ENCODE measurements at regions of chr1 and their contacts with region 1.

Region 1: GRCh38 chr1:154479764-154480421 is 22.1 kb upstream of the TDRD10 start:
- DNase-seq: peak; percentile 92
- H3K4me3 ChIP-seq: no peak overlapping the region
- H3K27ac ChIP-seq: no peak overlapping the region
- H3K4me1 ChIP-seq: peaks cover 35% of the 10 kb centered on the region
- H3K27me3 ChIP-seq: no peaks in the 10 kb centered on the region
- CTCF ChIP-seq: peak; percentile 77 to 93
- POLR2A ChIP-seq: no peak

Region 2: GRCh38 chr1:154198756-154199562 is 280.9 kb before region 1 on chr1:
- CTCF ChIA-PET with region 1: interaction called, 3 read pairs
- POLR2A ChIA-PET with region 1: no interaction called
- dilution Hi-C with region 1: no loop called
- intact Hi-C with region 1: loop called (anchors 10 kb)
- DNase-seq: peak; percentile 78
- H3K4me3 ChIP-seq: no peak overlapping the region
- H3K27ac ChIP-seq: no peak overlapping the region
- H3K4me1 ChIP-seq: no peaks in the 10 kb centered on the region
- H3K27me3 ChIP-seq: peaks cover 3 to 4% of the 10 kb centered on the region in 2 experiments
- CTCF ChIP-seq: peak; percentile 31 to 56
- POLR2A ChIP-seq: no peak

Region 3: DNA sequence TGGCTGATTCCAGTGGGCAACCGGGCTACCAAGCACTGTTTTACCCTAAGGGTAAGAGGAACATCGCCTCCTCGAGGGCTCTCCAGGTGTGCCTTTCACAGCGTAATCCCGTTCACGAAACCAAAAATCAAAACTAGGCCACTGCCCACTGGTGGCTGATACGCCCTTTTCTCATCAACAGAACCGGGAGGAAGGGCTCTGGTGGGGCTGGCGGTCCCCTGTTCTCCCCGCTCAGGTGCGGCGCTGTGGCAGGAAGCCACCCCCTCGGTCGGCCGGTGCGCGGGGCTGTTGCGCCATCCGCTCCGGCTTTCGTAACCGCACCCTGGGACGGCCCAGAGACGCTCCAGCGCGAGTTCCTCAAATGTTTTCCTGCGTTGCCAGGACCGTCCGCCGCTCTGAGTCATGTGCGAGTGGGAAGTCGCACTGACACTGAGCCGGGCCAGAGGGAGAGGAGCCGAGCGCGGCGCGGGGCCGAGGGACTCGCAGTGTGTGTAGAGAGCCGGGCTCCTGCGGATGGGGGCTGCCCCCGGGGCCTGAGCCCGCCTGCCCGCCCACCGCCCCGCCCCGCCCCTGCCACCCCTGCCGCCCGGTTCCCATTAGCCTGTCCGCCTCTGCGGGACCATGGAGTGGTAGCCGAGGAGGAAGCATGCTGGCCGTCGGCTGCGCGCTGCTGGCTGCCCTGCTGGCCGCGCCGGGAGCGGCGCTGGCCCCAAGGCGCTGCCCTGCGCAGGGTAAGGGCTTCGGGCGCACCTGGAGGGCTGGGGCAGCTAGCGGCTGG is 74.7 kb before region 1 on chr1 and contains the start of gene IL6R:
- CTCF ChIA-PET with region 1: interaction called, 7 read pairs
- POLR2A ChIA-PET with region 1: no interaction called
- dilution Hi-C with region 1: no loop called
- intact Hi-C with region 1: loop called (anchors 2 kb)
- DNase-seq: peak; percentile 83
- H3K4me3 ChIP-seq: peak within 1 kb of the TSS; percentile 6 to 49 (median 36)
- H3K27ac ChIP-seq: peak within 1 kb of the TSS; percentile 18
- H3K4me1 ChIP-seq: peaks cover 13% of the 10 kb centered on the region
- H3K27me3 ChIP-seq: no peaks in the 10 kb centered on the region
- CTCF ChIP-seq: peak; percentile 28 to 42
- POLR2A ChIP-seq: no peak
- total RNA-seq, gene IL6R: 3.3 and 4.8 TPM in 2 replicates

Region 4: DNA sequence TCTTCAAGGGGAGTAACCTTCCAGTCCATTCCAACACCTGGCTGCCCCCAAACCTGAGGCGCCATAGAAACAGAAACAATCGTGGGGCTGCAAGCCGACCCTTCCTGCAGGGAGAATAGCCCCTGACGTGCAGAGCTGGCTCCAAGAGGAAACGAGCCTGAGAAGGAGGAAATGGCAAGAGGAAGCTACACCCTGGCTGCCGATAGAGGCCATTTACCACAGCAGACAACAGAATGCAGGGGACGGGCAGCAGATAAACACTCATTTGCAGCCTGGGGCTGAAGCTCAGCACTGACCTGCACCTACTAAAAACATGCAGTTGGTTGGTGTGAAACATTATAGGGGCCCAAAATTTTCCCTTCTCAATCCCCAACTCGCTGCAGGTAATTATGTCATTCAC is 13.4 kb after region 1 on chr1:
- CTCF ChIA-PET with region 1: interaction called, 50 read pairs
- POLR2A ChIA-PET with region 1: interaction called, 13 read pairs
- dilution Hi-C with region 1: no loop called
- intact Hi-C with region 1: loop called (anchors 1 kb)
- DNase-seq: peak; percentile 84
- H3K4me3 ChIP-seq: peak overlapping the region in 1 of 3 experiments; percentile 3
- H3K27ac ChIP-seq: peak overlapping the region; percentile 89
- H3K4me1 ChIP-seq: peaks cover 89% of the 10 kb centered on the region
- H3K27me3 ChIP-seq: no peaks in the 10 kb centered on the region
- CTCF ChIP-seq: no peak
- POLR2A ChIP-seq: peak; percentile 75

Region 5: DNA sequence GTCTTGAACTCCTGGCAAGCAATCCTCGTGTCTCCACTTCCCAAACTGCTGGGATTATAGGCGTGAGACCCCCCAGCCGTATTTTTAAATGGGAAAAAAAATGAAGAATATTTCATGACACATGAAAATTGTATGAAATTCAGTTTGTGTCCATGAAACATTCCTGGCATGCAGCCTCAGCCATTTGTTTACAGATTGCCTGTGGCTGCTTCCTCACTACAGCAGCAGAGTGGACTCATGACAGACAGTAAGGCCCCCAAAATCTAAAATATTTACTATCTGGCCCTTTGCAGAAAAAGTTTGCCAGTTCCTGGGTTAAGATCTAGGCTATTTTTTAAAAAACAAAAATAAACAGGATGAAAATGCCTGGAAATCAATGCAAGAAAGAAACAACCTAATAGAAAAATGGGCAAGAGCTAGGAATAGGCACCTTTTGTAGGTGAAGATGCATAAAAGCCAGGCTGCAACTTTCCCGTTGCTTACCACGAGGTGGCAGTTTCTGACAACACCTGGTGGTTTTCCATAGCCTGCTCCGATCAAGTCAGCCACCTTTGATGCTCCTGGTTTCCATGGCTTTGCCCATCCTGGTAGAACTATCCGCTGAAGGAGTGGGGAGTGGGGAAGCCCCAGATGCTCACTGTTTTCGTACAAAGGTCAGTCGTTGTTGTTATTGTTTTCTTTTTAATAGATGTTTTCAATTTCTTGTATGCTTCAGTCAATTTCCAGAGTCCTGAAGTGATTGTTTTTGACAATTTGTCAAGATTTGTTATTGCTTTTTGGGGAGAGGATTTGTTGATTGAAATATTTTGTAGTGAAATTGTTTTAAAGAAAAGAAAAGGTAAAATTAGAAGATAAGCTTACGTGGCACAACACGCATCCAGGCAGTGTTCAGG is 54.3 kb after region 1 on chr1:
- CTCF ChIA-PET with region 1: interaction called, 61 read pairs
- POLR2A ChIA-PET with region 1: no interaction called
- dilution Hi-C with region 1: no loop called
- intact Hi-C with region 1: no loop called
- DNase-seq: no peak
- H3K4me3 ChIP-seq: no peak overlapping the region
- H3K27ac ChIP-seq: no peak overlapping the region
- H3K4me1 ChIP-seq: no peaks in the 10 kb centered on the region
- H3K27me3 ChIP-seq: no peaks in the 10 kb centered on the region
- CTCF ChIP-seq: peak; percentile 14 to 27
- POLR2A ChIP-seq: no peak

Region 6: DNA sequence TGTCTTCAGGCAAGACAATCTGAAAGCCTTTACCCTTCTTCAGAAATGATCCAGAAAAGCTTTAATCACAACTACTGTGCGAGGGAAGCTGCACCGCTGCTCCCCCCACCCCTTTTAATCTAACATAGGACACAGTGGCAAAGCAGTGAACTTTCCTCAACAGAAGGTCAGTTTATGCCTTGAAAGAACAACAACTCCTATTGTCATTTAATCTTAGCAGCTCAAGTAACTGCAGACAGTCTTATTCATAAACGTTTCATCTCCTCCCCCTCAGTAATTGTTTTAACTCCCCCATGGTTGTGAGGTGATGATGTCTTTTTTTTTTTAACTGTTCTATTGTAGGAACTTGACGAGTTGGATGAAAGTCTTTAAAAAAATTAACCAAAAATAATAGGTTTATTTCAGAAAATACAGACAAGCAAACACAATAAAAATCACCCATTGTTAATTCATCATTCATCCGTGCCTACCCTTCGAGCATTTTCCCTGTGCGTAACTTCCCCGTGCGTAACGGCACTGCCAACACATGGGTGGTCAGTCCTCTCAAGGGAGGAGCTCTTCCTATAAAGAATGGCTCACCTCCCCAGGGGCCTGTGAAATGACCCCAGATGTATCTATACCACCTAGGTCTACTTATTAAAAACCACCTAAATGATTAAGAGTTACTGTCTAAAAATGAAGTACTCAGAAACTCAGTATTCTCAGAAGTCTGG is 131.4 kb after region 1 on chr1:
- CTCF ChIA-PET with region 1: no interaction called
- POLR2A ChIA-PET with region 1: no interaction called
- dilution Hi-C with region 1: no loop called
- intact Hi-C with region 1: no loop called
- DNase-seq: no peak
- H3K4me3 ChIP-seq: no peak overlapping the region
- H3K27ac ChIP-seq: no peak overlapping the region
- H3K4me1 ChIP-seq: peaks cover 6% of the 10 kb centered on the region
- H3K27me3 ChIP-seq: no peaks in the 10 kb centered on the region
- CTCF ChIP-seq: no peak
- POLR2A ChIP-seq: no peak

Region 7: DNA sequence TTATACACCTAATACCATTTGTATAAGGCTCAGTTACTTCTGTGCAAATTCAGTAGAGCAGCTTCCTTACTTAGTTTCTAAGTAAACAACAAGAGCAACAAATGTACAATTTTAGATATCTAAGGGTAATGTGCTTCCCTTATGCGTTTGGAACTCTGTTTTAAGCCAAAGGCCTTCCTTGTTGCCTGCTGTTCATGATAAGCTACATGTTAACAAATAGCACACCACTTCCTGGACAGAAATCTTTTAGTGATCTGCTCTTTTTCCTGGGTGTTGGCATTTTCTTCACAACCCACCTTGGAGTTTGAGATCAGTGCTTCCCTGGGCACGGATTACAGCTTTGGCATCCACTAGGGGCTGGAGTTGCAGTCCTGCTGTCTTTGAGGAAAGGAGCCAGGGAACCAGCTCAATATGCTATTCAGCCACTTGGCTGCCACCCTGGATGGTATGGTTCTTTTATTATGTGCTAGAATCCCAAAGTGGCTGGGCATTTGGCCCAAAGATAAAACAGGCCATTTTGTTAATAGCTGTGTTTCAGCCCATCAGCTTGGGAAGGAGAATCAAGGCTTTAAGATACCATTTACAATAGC is 183.7 kb after region 1 on chr1:
- CTCF ChIA-PET with region 1: interaction called, 10 read pairs
- POLR2A ChIA-PET with region 1: no interaction called
- dilution Hi-C with region 1: no loop called
- intact Hi-C with region 1: no loop called
- DNase-seq: no peak
- H3K4me3 ChIP-seq: no peak overlapping the region
- H3K27ac ChIP-seq: no peak overlapping the region
- H3K4me1 ChIP-seq: no peaks in the 10 kb centered on the region
- H3K27me3 ChIP-seq: peaks cover 7 to 30% of the 10 kb centered on the region in 2 experiments
- CTCF ChIP-seq: no peak
- POLR2A ChIP-seq: no peak

Region 8: GRCh38 chr1:154809436-154810413 is 329.8 kb after region 1 on chr1:
- CTCF ChIA-PET with region 1: no interaction called
- POLR2A ChIA-PET with region 1: no interaction called
- dilution Hi-C with region 1: no loop called
- intact Hi-C with region 1: no loop called
- DNase-seq: peak; percentile 62
- H3K4me3 ChIP-seq: no peak overlapping the region
- H3K27ac ChIP-seq: no peak overlapping the region
- H3K4me1 ChIP-seq: peaks cover 9% of the 10 kb centered on the region
- H3K27me3 ChIP-seq: peaks cover 0 to 11% of the 10 kb centered on the region in 2 experiments
- CTCF ChIP-seq: no peak
- POLR2A ChIP-seq: no peak

Region 9: DNA sequence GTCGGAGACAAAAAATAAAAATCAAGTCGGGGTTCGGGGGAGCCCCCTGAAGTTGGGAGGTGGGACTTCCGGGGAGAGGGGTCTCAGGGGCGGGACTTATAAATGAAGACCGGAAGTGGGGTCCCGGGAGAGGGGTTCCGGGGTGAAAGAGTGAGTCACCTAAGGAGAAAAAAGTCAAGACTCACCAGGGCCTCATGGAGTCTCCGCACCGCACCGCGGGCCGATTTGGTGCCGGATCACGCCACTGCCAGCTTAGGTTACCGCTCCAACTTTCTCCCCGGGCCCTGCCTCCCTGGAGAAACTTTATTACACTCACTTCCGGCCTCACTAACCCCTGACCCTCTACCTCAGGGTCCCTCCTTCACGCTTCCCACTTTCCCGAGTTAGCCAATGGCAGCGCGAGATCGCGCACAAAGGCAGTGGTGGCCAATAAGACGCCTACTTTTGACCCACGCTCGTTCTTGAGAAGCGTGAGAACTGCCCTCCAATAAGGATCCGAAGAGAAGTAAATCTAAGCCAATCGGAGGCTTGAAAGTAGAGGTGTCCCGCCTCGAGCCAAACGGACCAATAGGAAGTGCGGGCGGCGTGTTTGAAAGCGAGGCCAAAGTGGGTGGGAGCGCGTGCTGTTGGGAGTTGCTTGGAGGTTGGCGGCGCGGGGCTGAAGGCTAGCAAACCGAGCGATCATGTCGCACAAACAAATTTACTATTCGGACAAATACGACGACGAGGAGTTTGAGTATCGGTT is 494.3 kb after region 1 on chr1 and contains the start of gene CKS1B:
- CTCF ChIA-PET with region 1: no interaction called
- POLR2A ChIA-PET with region 1: no interaction called
- dilution Hi-C with region 1: no loop called
- intact Hi-C with region 1: loop called (anchors 10 kb)
- DNase-seq: peak; percentile 100
- H3K4me3 ChIP-seq: peak within 1 kb of the TSS; percentile 64 to 88 (median 87)
- H3K27ac ChIP-seq: peak within 1 kb of the TSS; percentile 99
- H3K4me1 ChIP-seq: peaks cover 36% of the 10 kb centered on the region
- H3K27me3 ChIP-seq: no peaks in the 10 kb centered on the region
- CTCF ChIP-seq: no peak
- POLR2A ChIP-seq: peak; percentile 60
- total RNA-seq, gene CKS1B: 126 and 128 TPM in 2 replicates

Region 10: GRCh38 chr1:155329971-155330598 is 850.2 kb after region 1 on chr1:
- CTCF ChIA-PET with region 1: no interaction called
- POLR2A ChIA-PET with region 1: no interaction called
- dilution Hi-C with region 1: no loop called
- intact Hi-C with region 1: no loop called
- DNase-seq: no peak
- H3K4me3 ChIP-seq: no peak overlapping the region
- H3K27ac ChIP-seq: no peak overlapping the region
- H3K4me1 ChIP-seq: peaks cover 7% of the 10 kb centered on the region
- H3K27me3 ChIP-seq: no peaks in the 10 kb centered on the region
- CTCF ChIP-seq: no peak
- POLR2A ChIP-seq: no peak

Measured in endothelial cell of umbilical vein (primary cell).